AG04450 (cell line): ENCODE measurements at regions of chr16 and their contacts with region 1.

Region 1: GRCh38 chr16:11639925-11640899 is 28.0 kb upstream of the SNN start:
- DNase-seq: peak; percentile 99
- H3K4me3 ChIP-seq: 0 out of 2 replicates have a peak overlapping the region, but pooled peaks have one; percentile 17
- H3K27ac ChIP-seq: peak overlapping the region; percentile 100
- H3K27me3 ChIP-seq: no peaks in the 10 kb centered on the region
- CTCF ChIP-seq: no peak

Region 2: GRCh38 chr16:11417487-11417886 is 222.7 kb before region 1 on chr16:
- CTCF ChIA-PET with region 1: no interaction called
- POLR2A ChIA-PET with region 1: no interaction called
- DNase-seq: no peak
- H3K4me3 ChIP-seq: no peak overlapping the region
- H3K27ac ChIP-seq: no peak overlapping the region
- H3K27me3 ChIP-seq: peaks cover 7% of the 10 kb centered on the region
- CTCF ChIP-seq: no peak

Region 3: DNA sequence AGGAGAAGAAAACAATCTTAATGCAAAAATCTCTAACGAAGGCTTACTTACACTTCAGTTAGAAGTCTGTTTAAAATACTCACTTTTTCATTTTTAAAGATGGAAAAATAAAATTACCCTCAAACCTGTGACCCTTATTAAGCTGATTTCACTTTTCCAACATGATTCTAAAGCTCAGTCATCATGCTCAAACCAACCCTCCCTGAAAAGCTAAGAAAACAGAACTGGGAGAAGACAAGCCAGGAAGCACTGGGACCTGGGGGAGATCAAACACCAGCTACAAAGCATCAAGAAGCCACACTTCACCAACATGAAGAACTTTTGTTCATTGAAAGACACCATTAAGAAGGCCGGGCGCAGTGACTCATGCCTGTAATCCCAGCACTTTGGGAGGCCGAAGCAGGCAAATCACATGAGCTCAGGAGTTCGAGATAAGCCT is 142.3 kb before region 1 on chr16:
- CTCF ChIA-PET with region 1: no interaction called
- POLR2A ChIA-PET with region 1: no interaction called
- DNase-seq: no peak
- H3K4me3 ChIP-seq: no peak overlapping the region
- H3K27ac ChIP-seq: peak overlapping the region; percentile 88
- H3K27me3 ChIP-seq: no peaks in the 10 kb centered on the region
- CTCF ChIP-seq: no peak

Region 4: DNA sequence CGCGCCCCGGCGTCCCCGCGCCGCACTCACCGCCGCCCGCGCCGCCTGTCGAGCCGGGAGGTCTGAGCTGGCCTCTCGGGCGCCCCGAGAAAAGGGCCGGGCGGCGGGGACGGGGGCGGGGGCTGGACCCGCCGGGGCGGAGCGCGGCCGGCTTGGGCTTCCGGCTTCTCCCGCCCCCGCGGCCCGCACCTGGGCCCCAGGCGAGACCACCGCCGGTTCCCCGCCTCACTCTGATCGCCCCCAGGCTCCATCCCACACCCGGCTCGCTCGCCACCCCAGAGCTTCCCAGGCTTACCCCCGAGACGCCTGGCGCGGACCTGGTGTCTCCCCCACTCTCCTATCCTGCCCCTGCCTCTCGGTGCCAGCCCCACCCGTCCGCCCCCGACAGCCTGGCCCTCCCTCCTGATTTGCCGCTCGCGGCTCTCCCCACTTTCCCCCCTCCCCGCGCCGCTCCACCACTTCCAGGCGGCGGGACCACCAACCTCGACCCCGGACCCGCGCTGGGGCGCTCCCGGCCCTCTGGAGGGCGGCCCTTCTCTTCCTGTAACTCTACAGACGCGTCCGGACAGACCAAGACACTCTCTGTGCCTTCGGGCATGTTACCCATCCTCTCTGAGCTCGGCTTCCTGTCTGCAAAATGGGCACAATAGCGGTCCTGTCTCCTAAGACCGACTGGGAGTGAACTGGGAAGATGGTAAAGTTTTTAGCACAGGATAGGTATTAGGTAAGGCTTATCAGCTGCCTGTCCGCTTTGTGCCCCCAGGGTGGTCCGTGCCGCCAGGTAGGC is 53.2 kb before region 1 on chr16 and contains the start of gene LITAF:
- CTCF ChIA-PET with region 1: interaction called, 15 read pairs
- POLR2A ChIA-PET with region 1: interaction called, 9 read pairs
- DNase-seq: no peak
- H3K4me3 ChIP-seq: peak within 1 kb of the TSS; percentile 90
- H3K27ac ChIP-seq: peak within 1 kb of the TSS; percentile 57
- H3K27me3 ChIP-seq: no peaks in the 10 kb centered on the region
- CTCF ChIP-seq: no peak
- polyA plus RNA-seq, gene LITAF: 190 and 217 TPM in 2 replicates

Region 5: GRCh38 chr16:11621920-11622651 is 18.1 kb before region 1 on chr16:
- CTCF ChIA-PET with region 1: interaction called, 4 read pairs
- POLR2A ChIA-PET with region 1: interaction called, 30 read pairs
- DNase-seq: no peak
- H3K4me3 ChIP-seq: peak overlapping the region; percentile 35
- H3K27ac ChIP-seq: peak overlapping the region; percentile 88
- H3K27me3 ChIP-seq: no peaks in the 10 kb centered on the region
- CTCF ChIP-seq: no peak

Region 6: GRCh38 chr16:11871193-11871592 is 231.0 kb after region 1 on chr16:
- CTCF ChIA-PET with region 1: interaction called, 10 read pairs
- POLR2A ChIA-PET with region 1: no interaction called
- DNase-seq: no peak
- H3K4me3 ChIP-seq: no peak overlapping the region
- H3K27ac ChIP-seq: no peak overlapping the region
- H3K27me3 ChIP-seq: no peaks in the 10 kb centered on the region
- CTCF ChIP-seq: peak; percentile 23; the same call in 1 of the 2 replicates